CD8-positive, alpha-beta memory T cell (primary cell): ENCODE measurements at regions of chr9 and their contacts with region 1.

Region 1: GRCh38 chr9:72022841-72023240 is 37.6 kb downstream of the C9orf57 start:
- DNase-seq: no peak
- H3K4me3 ChIP-seq: no peak overlapping the region
- H3K4me3 Mint-ChIP-seq: no peak overlapping the region
- H3K27ac ChIP-seq: no peak overlapping the region
- H3K27ac Mint-ChIP-seq: peak overlapping the region in 1 of 8 donors; percentile 29
- H3K4me1 ChIP-seq: no peaks in the 10 kb centered on the region
- H3K4me1 Mint-ChIP-seq: peaks cover 0 to 2% (median 2%) of the 10 kb centered on the region in 3 donors
- H3K27me3 ChIP-seq: no peaks in the 10 kb centered on the region
- H3K27me3 Mint-ChIP-seq: no peaks in the 10 kb centered on the region

Region 2: DNA sequence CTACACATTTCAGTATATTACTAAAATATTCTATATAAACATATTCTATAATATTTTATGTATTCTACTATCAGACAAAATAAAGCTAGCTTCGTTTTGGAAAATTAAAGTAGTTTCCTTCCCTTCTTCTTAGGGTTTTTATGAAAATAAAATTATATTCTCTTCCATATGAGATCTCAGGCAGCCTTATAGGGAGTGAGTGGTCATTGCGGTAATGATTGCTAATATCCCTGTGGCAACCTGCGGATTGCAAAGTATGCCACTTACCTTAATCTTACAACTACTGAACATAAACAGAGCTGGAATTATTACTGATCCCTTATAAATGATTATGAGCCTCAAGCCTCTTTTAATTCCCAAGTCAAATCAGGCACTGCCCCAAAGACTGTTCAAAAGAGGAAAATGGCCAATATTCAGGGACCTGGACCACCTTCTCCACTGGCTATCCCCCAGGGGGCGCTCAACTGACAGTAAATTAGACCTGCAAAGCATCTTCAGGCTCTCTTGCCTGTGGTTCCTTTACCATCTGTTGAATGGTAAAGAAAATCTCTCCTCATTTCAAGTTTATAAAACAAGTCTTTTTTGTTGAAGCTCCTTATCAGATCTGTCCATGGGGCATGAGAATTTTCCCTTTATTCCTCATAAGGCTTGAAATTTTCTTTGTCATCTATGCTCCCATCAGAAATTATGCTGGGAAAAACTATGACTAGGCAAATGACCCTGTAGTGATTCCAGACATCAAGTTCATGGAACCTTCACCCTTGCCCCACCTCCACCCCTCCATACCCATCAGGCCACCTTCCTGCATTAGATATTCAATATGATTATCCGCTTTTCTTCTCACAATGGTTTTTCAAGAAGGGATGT is 418.4 kb before region 1 on chr9:
- CTCF ChIA-PET with region 1: interaction called, 10 read pairs
- POLR2A ChIA-PET with region 1: no interaction called
- DNase-seq: peak; percentile 64 to 84 (median 69)
- H3K4me3 ChIP-seq: no peak overlapping the region
- H3K4me3 Mint-ChIP-seq: no peak overlapping the region
- H3K27ac ChIP-seq: no peak overlapping the region
- H3K27ac Mint-ChIP-seq: no peak overlapping the region
- H3K4me1 ChIP-seq: no peaks in the 10 kb centered on the region
- H3K4me1 Mint-ChIP-seq: no peaks in the 10 kb centered on the region
- H3K27me3 ChIP-seq: no peaks in the 10 kb centered on the region
- H3K27me3 Mint-ChIP-seq: no peaks in the 10 kb centered on the region

Region 3: GRCh38 chr9:72009774-72010173 is 13.1 kb before region 1 on chr9:
- CTCF ChIA-PET with region 1: interaction called, 14 read pairs
- POLR2A ChIA-PET with region 1: no interaction called
- DNase-seq: no peak
- H3K4me3 ChIP-seq: no peak overlapping the region
- H3K4me3 Mint-ChIP-seq: no peak overlapping the region
- H3K27ac ChIP-seq: no peak overlapping the region
- H3K27ac Mint-ChIP-seq: no peak overlapping the region
- H3K4me1 ChIP-seq: no peaks in the 10 kb centered on the region
- H3K4me1 Mint-ChIP-seq: peaks cover 5 to 10% (median 9%) of the 10 kb centered on the region in 3 donors
- H3K27me3 ChIP-seq: no peaks in the 10 kb centered on the region
- H3K27me3 Mint-ChIP-seq: no peaks in the 10 kb centered on the region

Region 4: DNA sequence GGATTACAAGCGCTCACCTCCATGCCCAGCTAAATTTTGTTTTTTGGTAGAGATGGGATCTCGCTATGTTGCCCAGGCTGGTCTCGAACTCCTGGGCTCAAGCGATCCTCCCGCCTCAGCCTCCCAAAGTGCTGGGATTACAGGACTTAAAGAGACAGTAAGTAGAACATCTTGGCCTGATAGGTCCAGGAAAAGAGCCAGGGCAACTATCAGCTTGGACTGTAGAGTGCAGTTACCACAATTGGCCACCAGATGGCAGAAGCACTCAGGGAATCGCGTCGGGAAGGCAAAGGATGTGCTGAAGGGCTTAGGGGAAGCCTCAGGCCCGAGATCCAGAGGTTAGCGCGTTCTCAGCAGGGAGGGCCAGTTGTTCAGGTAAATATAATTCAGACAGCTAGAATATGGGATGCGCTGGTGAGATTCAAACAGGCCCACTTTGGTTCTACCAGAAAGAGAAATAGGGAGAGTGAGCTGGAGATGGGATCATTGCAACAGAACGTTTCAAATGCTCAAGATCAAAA is 16.1 kb after region 1 on chr9:
- CTCF ChIA-PET with region 1: interaction called, 45 read pairs
- POLR2A ChIA-PET with region 1: no interaction called
- DNase-seq: peak; percentile 22 to 69 (median 45)
- H3K4me3 ChIP-seq: no peak overlapping the region
- H3K4me3 Mint-ChIP-seq: peak overlapping the region in 2 of 7 donors; percentile 12 to 37
- H3K27ac ChIP-seq: no peak overlapping the region
- H3K27ac Mint-ChIP-seq: no peak overlapping the region
- H3K4me1 ChIP-seq: no peaks in the 10 kb centered on the region
- H3K4me1 Mint-ChIP-seq: peaks cover 5 to 6% (median 6%) of the 10 kb centered on the region in 3 donors
- H3K27me3 ChIP-seq: no peaks in the 10 kb centered on the region
- H3K27me3 Mint-ChIP-seq: peaks cover 8 to 11% of the 10 kb centered on the region in 2 donors

Region 5: DNA sequence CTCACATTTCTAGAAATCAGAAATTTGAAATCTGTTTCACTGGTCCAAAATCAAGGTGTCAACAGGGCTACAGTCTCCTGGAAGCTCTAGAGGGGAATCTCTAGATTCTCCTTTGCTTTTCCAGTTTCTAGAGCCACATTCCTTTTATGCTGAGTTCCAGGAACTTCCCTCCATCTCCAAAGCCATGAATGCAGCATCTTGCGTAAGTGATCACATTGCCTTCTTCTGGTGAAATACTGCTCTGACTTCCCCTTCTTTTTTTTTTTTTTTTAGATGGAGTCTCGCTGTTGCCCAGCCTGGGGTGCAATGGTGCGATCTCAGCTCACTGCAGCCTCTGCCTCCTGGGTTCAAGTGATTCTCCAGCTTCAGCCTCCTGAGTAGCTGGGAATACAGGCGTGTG is 150.2 kb after region 1 on chr9:
- CTCF ChIA-PET with region 1: no interaction called
- POLR2A ChIA-PET with region 1: no interaction called
- DNase-seq: no peak
- H3K4me3 ChIP-seq: no peak overlapping the region
- H3K4me3 Mint-ChIP-seq: no peak overlapping the region
- H3K27ac ChIP-seq: no peak overlapping the region
- H3K27ac Mint-ChIP-seq: no peak overlapping the region
- H3K4me1 ChIP-seq: no peaks in the 10 kb centered on the region
- H3K4me1 Mint-ChIP-seq: no peaks in the 10 kb centered on the region
- H3K27me3 ChIP-seq: no peaks in the 10 kb centered on the region
- H3K27me3 Mint-ChIP-seq: peaks cover 4 to 5% of the 10 kb centered on the region in 2 donors